Right ventricle myocardium inferior (tissue), 1 donor: ENCODE measurements at regions of chr3 and their contacts with region 1.

Region 1: GRCh38 chr3:14779069-14779685 is 39.6 kb upstream of the FGD5 start:
- DNase-seq: no peak
- ATAC-seq: no peak

Region 2: DNA sequence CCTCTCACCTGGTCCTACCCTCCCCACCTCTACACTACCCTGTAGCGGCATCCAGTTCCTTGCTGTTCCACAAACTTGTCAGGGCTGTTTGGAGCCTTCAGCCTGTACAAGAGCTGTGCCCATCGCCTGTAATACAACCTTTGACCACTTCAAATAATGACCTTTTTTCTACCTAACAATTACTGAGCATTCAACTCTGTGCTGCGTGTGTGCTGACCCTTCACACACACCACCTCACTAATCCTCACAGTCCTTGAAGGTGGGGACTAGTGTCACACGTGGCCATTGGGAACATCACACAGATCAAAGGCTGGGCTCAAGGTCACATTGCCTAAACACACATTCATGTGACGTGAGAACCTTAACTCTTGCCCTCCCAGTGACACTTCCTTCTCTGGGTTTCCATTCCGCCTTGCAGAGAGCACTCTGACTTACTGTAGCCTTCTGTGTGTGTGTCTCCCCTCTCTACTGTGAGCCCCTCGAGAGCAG is 101.1 kb before region 1 on chr3:
- intact Hi-C with region 1: loop called (anchors 2 kb)
- DNase-seq: no peak
- ATAC-seq: no peak